ENCODE measurements at regions of chr12 and their contacts with region 1.

Region 1: DNA sequence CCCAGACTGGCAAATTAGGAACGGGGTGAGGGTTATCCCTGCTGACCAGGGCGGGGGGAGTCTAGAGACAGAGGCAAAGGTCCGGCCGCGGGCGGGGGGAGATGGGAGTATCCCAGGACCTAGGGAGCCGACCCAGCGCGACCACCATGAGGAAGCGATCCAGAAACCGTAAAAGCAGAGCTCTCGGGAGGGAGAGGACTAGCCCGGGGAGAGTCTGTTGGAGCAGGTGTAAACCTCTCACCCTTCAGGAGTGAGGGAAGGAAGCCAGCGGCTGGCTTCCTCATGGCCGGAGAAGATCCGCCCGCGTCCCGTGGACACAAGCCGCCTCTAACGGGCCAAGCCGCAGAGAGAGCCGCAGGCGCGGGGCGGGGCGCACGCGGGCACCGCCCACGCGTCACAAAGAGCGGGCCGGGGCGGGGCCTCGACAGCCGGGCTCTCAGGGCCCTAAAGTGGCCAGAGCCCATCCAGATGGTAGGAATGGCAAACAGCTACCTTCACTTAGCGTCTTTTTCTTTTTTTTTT is at the start of gene ACRBP:
- DNase-seq: no peak
- H3K4me3 ChIP-seq: no peak within 1 kb of the TSS
- H3K27ac ChIP-seq: no peak within 1 kb of the TSS
- H3K4me1 ChIP-seq: no peaks in the 10 kb centered on the region
- H3K27me3 ChIP-seq: no peaks in the 10 kb centered on the region; the same call in 1 of the 2 replicates
- CTCF ChIP-seq: no peak
- total RNA-seq, gene ACRBP: 4.2 and 6.1 TPM in 2 replicates

Region 2: DNA sequence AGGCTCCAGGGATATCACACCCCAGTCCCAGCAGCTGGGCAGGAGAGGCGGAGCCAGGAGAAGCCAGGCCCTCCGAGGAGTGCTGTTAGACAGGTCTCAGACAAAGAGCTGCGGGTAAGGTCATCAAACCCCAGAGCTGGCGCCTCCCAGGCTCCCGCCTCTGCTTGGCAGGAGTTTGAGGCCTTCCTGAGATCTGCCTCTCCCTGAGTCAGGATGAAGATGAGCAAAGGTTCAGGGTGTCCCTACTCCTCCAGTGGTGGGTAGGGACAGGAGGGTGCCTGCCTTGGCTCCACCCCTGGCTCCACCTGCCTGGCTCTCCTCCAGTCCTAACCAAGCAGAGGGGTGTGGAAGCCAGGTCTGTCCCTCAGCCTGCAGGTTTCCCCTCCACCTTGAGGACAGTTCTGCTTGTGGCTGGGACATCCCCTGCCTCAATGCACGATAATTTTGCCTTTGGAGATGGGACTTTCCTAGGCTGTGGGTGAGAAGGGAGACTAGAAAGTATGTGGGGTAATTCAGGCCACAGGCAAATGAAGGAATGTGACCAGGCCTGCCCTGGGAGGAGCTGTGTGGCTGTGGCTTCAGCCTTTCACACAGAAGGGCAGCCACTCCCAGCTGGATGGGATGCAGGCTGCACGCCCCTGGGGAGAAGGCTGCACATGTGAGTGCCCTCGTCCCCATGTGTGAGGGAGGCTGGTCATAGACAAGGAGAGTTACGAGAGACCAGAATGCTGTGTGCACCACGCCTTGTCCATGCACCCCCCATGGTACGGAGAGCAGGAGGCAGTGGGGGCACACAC is 334.4 kb before region 1 on chr12:
- CTCF ChIA-PET with region 1: no interaction called
- POLR2A ChIA-PET with region 1: interaction called, 23 read pairs
- intact Hi-C with region 1: no loop called
- DNase-seq: peak; percentile 96
- H3K4me3 ChIP-seq: peak overlapping the region; percentile 33; the same call in 1 of the 2 replicates
- H3K27ac ChIP-seq: peak overlapping the region; percentile 97
- H3K4me1 ChIP-seq: peaks cover 54% of the 10 kb centered on the region
- H3K27me3 ChIP-seq: no peaks in the 10 kb centered on the region
- CTCF ChIP-seq: no peak

Region 3: DNA sequence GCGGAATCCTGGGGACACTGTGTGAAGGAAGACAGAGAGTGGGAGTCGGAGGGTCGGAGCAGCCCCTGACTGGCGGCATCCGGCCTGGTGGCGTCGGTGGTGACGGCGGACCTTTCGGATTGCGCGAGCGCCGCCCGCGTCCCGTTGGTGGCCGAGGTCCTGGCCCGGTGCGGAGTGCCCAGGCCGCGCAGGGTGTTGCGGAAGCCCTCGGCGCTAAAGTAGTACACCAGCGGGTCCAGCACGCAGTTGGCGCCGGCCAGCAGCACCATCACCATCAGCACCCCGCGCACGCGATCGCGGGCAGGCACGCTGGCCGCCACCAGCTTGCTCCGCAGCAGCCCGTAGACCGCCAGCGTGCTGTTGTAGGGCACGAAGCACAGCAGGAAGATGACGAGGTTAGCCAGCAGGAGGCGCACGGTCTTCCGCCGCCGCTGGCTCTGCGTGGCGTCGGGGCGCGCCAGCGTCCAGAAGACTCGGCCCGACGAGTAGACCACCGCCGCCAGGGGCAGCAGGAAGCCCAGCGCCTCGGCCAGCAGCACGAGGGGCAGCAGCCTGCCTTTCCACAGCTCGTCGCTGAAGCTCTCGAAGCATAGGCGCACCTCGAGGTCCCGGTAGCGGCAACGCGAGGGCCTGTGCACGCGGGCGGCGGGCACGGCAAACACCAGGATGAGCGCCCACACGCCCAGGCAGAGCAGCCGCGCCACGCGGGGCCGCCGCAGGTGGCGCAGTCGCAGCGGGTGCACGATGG is 26.8 kb before region 1 on chr12:
- CTCF ChIA-PET with region 1: no interaction called
- POLR2A ChIA-PET with region 1: no interaction called
- intact Hi-C with region 1: loop called (anchors 1 kb)
- DNase-seq: no peak
- H3K4me3 ChIP-seq: no peak overlapping the region
- H3K27ac ChIP-seq: no peak overlapping the region
- H3K4me1 ChIP-seq: no peaks in the 10 kb centered on the region
- H3K27me3 ChIP-seq: no peaks in the 10 kb centered on the region
- CTCF ChIP-seq: no peak